IMR-90 (cell line): ENCODE measurements at regions of chr12 and their contacts with region 1.

Region 1: GRCh38 chr12:103840876-103841689 is at the start of gene NT5DC3:
- DNase-seq: peak; percentile 74
- ATAC-seq: peak; percentile 95
- H3K4me3 ChIP-seq: peak within 1 kb of the TSS; percentile 95
- H3K27ac ChIP-seq: peak within 1 kb of the TSS; percentile 51
- H3K4me1 ChIP-seq: peaks cover 9% of the 10 kb centered on the region
- H3K27me3 ChIP-seq: no peaks in the 10 kb centered on the region
- CTCF ChIP-seq: no peak
- POLR2A ChIP-seq: peak; percentile 82
- RAD21 ChIP-seq: no peak
- total RNA-seq, gene NT5DC3: 17.6 and 23.1 TPM in 2 replicates

Region 2: GRCh38 chr12:103806803-103807202 is 34.3 kb before region 1 on chr12:
- CTCF ChIA-PET with region 1: no interaction called
- POLR2A ChIA-PET with region 1: no interaction called
- dilution Hi-C with region 1: no loop called
- in situ Hi-C with region 1: no loop called
- intact Hi-C with region 1: loop called (anchors 5 kb)
- DNase-seq: no peak
- ATAC-seq: no peak
- H3K4me3 ChIP-seq: no peak overlapping the region
- H3K27ac ChIP-seq: 0 out of 2 replicates have a peak overlapping the region, but pooled peaks have one; percentile 14
- H3K4me1 ChIP-seq: peaks cover 20% of the 10 kb centered on the region
- H3K27me3 ChIP-seq: no peaks in the 10 kb centered on the region
- CTCF ChIP-seq: no peak
- POLR2A ChIP-seq: no peak
- RAD21 ChIP-seq: no peak